ENCODE measurements at regions of chr5 and their contacts with region 1.

Region 1: GRCh38 chr5:141951332-141951781 is 6.6 kb downstream of the PCDH12 start:
- DNase-seq: no peak
- H3K4me3 ChIP-seq: no peak overlapping the region
- H3K27ac ChIP-seq: no peak overlapping the region
- H3K4me1 ChIP-seq: no peaks in the 10 kb centered on the region
- H3K27me3 ChIP-seq: no peaks in the 10 kb centered on the region
- CTCF ChIP-seq: no peak
- POLR2A ChIP-seq: no peak

Region 2: DNA sequence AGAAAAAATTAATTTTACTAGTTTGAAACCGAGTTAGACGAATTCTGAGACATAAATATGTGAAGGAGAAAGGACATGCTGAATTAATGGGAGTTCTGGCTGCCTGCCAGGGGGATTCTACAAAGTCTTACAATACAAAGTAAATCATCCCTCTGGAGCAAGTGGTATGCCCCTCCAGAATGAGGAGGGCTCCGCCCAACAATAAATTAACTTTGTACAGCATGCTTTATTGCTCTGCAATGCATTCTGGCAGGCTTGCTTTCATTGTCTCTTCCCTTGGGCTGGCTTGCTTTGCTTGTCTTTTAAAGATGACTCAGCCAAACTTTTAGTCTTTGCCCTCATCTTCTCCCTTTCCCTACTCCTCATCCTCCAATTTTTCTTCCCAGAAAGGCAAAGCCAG is 911.8 kb before region 1 on chr5:
- intact Hi-C with region 1: loop called (anchors 5 kb)
- DNase-seq: no peak
- H3K4me3 ChIP-seq: peak overlapping the region in 1 of 3 donors; percentile 56
- H3K27ac ChIP-seq: no peak overlapping the region
- H3K4me1 ChIP-seq: no peaks in the 10 kb centered on the region
- H3K27me3 ChIP-seq: peaks cover 0 to 7% of the 10 kb centered on the region in 2 donors
- CTCF ChIP-seq: no peak
- POLR2A ChIP-seq: no peak

Region 3: GRCh38 chr5:141978389-141978788 is 27.0 kb after region 1 on chr5:
- intact Hi-C with region 1: loop called (anchors 1 kb)
- DNase-seq: no peak
- H3K4me3 ChIP-seq: no peak overlapping the region
- H3K27ac ChIP-seq: no peak overlapping the region
- H3K4me1 ChIP-seq: no peaks in the 10 kb centered on the region
- H3K27me3 ChIP-seq: no peaks in the 10 kb centered on the region
- CTCF ChIP-seq: no peak
- POLR2A ChIP-seq: no peak